Stomach (tissue), 19 donors: ENCODE measurements at regions of chr3 and their contacts with region 1.

Region 1: DNA sequence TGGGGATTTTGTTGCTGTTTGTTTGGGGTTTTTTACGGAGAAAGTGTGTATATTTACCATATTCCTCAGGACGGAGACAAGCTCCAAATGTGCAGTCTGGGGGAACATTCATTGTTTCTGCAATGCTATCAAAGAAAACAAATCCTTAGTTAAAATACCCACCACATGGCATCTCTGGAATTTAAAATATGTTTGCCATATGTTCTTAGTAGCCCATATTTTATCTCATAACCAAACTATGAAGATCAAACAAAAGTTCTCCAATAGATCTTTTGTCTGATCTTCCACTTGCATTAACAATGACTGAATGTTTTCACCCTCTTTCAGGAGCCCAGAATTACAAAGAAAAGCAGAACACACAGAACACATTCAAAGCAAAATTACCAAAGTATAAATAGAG is 35.3 kb downstream of the EFHB start:
- DNase-seq: no peak
- H3K4me3 ChIP-seq: no peak overlapping the region
- H3K27ac ChIP-seq: no peak overlapping the region
- H3K4me1 ChIP-seq: peaks cover 0 to 13% (median 4%) of the 10 kb centered on the region in 4 donors
- H3K27me3 ChIP-seq: no peaks in the 10 kb centered on the region
- CTCF ChIP-seq: no peak
- EP300 ChIP-seq: no peak
- POLR2A ChIP-seq: no peak

Region 2: DNA sequence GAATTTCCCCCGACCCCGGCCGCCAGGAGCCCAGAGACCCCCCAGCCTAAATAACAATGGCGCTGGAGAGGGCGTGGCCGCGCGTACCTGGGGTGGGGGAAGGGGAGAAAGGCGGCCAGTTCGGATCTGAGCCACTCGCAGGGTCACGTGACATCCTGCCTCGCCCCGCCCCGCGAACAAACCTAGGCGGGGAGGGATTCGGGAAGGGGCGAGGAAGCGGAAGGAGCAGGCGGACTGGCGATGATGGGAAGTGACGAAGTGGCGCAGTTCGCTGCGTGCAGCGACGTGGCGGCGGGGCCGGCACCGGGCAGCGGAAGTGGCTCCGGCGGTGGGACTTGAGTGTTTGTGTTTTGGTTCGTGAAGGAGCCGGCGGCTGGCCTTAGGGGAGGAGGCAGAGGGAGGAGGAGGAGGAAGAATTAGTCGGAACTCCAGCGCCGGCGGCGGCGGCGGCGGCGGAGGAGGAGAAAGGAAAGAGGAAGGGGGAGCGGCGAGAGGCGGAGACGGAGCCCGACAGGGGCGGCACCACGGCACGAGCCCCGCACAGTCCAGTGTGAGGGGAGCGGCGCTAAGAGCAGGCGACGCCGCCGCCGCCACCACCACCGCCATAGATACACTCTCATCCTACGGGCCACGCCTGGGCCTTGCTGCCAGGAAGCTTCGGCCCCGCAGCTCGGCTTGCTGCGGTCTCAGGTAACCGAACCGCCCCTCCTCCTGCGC is 48.3 kb after region 1 on chr3 and contains the start of gene RAB5A:
- intact Hi-C with region 1: loop called (anchors 10 kb)
- DNase-seq: peak; percentile 98 to 99
- H3K4me3 ChIP-seq: peak within 1 kb of the TSS; percentile 89 to 98 (median 96)
- H3K27ac ChIP-seq: peak within 1 kb of the TSS; percentile 98 to 100 (median 99)
- H3K4me1 ChIP-seq: peaks cover 23 to 49% (median 41%) of the 10 kb centered on the region in 4 donors
- H3K27me3 ChIP-seq: no peaks in the 10 kb centered on the region
- CTCF ChIP-seq: no peak
- EP300 ChIP-seq: peak; percentile 75
- POLR2A ChIP-seq: peak in 2 of 4 donors; percentile 71 to 80
- total RNA-seq, gene RAB5A: 9.3 to 163 (median 47.1) TPM